ENCODE measurements at regions of chr13 and their contacts with region 1.

Region 1: GRCh38 chr13:27276188-27276587 is 5.6 kb downstream of the RASL11A start:
- DNase-seq: no peak
- ATAC-seq: no peak
- H3K4me3 ChIP-seq: no peak overlapping the region
- H3K4me3 Mint-ChIP-seq: no peak overlapping the region
- H3K27ac ChIP-seq: no peak overlapping the region
- H3K27ac Mint-ChIP-seq: no peak overlapping the region
- H3K4me1 ChIP-seq: peaks cover 5% of the 10 kb centered on the region
- H3K4me1 Mint-ChIP-seq: peaks cover 18% of the 10 kb centered on the region
- H3K27me3 ChIP-seq: no peaks in the 10 kb centered on the region
- H3K27me3 Mint-ChIP-seq: peaks cover 4% of the 10 kb centered on the region
- CTCF ChIP-seq: no peak

Region 2: GRCh38 chr13:27242706-27243105 is 33.5 kb before region 1 on chr13:
- CTCF ChIA-PET with region 1: interaction called, 10 read pairs
- POLR2A ChIA-PET with region 1: no interaction called
- intact Hi-C with region 1: loop called in 1 of 2 experiments (anchors 5 kb)
- DNase-seq: no peak
- ATAC-seq: no peak
- H3K4me3 ChIP-seq: no peak overlapping the region
- H3K4me3 Mint-ChIP-seq: no peak overlapping the region
- H3K27ac ChIP-seq: no peak overlapping the region
- H3K27ac Mint-ChIP-seq: no peak overlapping the region
- H3K4me1 ChIP-seq: no peaks in the 10 kb centered on the region
- H3K4me1 Mint-ChIP-seq: peaks cover under 1% of the 10 kb centered on the region
- H3K27me3 ChIP-seq: no peaks in the 10 kb centered on the region
- H3K27me3 Mint-ChIP-seq: no peaks in the 10 kb centered on the region
- CTCF ChIP-seq: no peak

Region 3: DNA sequence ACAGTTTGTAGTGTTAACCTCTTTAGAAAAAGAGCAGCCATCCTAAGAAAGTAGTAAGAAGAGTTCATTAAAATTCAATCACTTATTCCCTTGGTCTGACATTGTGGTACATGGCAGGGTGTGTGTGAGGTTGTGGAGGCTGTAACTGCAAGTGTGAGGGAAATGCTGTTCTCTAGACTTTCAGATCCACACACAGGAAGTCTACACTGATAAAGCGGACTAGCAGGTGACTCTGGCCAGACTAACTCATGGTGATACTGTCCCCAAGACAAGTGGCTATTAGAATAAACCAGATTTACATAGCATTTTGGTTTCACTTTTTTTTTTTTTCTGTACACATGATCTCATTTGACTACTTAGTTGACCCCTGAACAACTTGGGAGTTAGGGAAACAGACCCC is 164.2 kb after region 1 on chr13:
- CTCF ChIA-PET with region 1: no interaction called
- POLR2A ChIA-PET with region 1: no interaction called
- intact Hi-C with region 1: no loop called
- DNase-seq: no peak
- ATAC-seq: no peak
- H3K4me3 ChIP-seq: no peak overlapping the region
- H3K4me3 Mint-ChIP-seq: no peak overlapping the region
- H3K27ac ChIP-seq: peak overlapping the region in 1 of 2 experiments; percentile 62
- H3K27ac Mint-ChIP-seq: peak overlapping the region; percentile 53
- H3K4me1 ChIP-seq: peaks cover 37% of the 10 kb centered on the region
- H3K4me1 Mint-ChIP-seq: peaks cover 44% of the 10 kb centered on the region
- H3K27me3 ChIP-seq: no peaks in the 10 kb centered on the region
- H3K27me3 Mint-ChIP-seq: no peaks in the 10 kb centered on the region
- CTCF ChIP-seq: no peak

Measured in CD8-positive, alpha-beta T cell (primary cell).